Natural killer cell (primary cell): ENCODE measurements at regions of chr2 and their contacts with region 1.

Region 1: GRCh38 chr2:55050133-55050994 is at the start of gene RTN4:
- DNase-seq: peak; percentile 96 to 99
- ATAC-seq: peak; percentile 87 to 97 (median 91)
- H3K4me3 ChIP-seq: peak within 1 kb of the TSS; percentile 85
- H3K4me3 Mint-ChIP-seq: peak within 1 kb of the TSS; percentile 96
- H3K27ac ChIP-seq: peak within 1 kb of the TSS; percentile 92
- H3K27ac Mint-ChIP-seq: peak within 1 kb of the TSS; percentile 93 to 99
- H3K4me1 ChIP-seq: peaks cover 23% of the 10 kb centered on the region
- H3K4me1 Mint-ChIP-seq: peaks cover 63 to 73% of the 10 kb centered on the region in 2 donors
- H3K27me3 ChIP-seq: no peaks in the 10 kb centered on the region
- H3K27me3 Mint-ChIP-seq: no peaks in the 10 kb centered on the region
- CTCF ChIP-seq: no peak
- total RNA-seq, gene RTN4: 100 to 117 (median 109) TPM

Region 2: GRCh38 chr2:54723131-54723995 is 327.0 kb before region 1 on chr2 and contains the start of gene EML6:
- intact Hi-C with region 1: no loop called
- DNase-seq: peak; percentile 96 to 99
- ATAC-seq: peak; percentile 94 to 99 (median 95)
- H3K4me3 ChIP-seq: peak within 1 kb of the TSS; percentile 62
- H3K4me3 Mint-ChIP-seq: peak within 1 kb of the TSS; percentile 96
- H3K27ac ChIP-seq: peak within 1 kb of the TSS; percentile 59
- H3K27ac Mint-ChIP-seq: peak within 1 kb of the TSS; percentile 64 to 88
- H3K4me1 ChIP-seq: peaks cover 19% of the 10 kb centered on the region
- H3K4me1 Mint-ChIP-seq: peaks cover 20 to 21% of the 10 kb centered on the region in 2 donors
- H3K27me3 ChIP-seq: peaks cover 19% of the 10 kb centered on the region
- H3K27me3 Mint-ChIP-seq: peaks cover 44 to 50% of the 10 kb centered on the region in 2 donors
- CTCF ChIP-seq: peak; percentile 23
- total RNA-seq, gene EML6: 1.7 to 3.2 (median 2.4) TPM

Region 3: DNA sequence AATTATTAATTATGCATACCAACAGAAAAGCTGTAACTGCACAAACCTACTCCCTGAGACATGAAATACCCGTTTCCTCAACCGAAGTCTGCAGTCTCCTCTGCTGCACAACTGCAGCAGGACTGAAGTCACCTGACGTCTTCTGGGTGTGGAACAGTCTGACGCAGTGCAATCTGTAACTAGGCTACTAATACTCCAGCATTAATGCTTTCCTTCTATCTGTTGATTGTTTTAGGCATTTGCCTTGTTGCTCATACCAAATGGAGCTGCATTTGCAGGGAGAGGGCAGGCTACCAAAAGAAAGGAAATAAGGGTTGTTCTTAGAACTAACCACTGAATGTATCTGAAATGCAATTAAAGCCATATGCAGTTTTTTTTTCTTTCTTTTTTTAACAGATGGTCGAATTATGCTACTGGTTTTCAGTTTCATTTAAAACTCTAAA is 40.2 kb before region 1 on chr2:
- intact Hi-C with region 1: loop called (anchors 2 kb)
- DNase-seq: peak; percentile 33 to 79
- ATAC-seq: peak; percentile 92 to 96 (median 93)
- H3K4me3 ChIP-seq: peak overlapping the region; percentile 53
- H3K4me3 Mint-ChIP-seq: peak overlapping the region; percentile 92
- H3K27ac ChIP-seq: peak overlapping the region; percentile 68
- H3K27ac Mint-ChIP-seq: peak overlapping the region; percentile 84 to 92
- H3K4me1 ChIP-seq: peaks cover 7% of the 10 kb centered on the region
- H3K4me1 Mint-ChIP-seq: peaks cover 64 to 66% of the 10 kb centered on the region in 2 donors
- H3K27me3 ChIP-seq: no peaks in the 10 kb centered on the region
- H3K27me3 Mint-ChIP-seq: no peaks in the 10 kb centered on the region
- CTCF ChIP-seq: no peak

Region 4: DNA sequence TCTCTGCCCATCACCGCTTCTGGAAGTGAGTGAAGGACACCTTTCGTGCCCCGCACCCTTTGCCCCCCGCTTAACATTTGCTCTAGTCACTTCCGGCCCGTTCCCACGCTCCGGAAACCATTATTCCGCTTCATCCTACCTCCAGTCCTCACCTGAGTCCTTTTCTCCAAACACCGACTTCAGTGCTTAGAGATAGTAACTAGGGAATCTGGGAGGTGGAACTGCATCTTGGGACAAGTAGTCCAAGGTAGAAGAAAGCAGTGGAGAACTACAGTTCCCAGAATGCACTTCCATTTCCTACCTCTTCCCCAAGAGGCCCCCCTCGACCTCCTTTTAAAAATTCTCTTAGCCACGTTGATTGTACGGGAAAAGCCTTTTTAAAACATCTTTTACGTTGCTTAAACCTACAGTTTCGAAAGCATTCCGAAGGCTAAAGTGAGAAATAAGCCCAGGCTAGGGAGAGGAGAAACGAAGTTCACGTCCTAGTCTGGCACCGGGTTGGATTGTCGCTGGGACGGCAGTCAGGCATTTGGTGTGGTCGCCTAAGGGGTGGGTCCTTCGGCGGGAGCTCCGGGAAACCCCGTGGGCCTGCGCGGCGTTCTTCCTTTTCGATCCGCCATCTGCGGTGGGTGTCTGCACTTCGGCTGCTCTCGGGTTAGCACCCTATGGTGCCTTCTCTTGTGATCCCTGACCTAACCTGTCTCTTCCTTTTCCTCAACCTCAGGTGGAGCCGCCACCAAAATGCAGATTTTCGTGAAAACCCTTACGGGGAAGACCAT is 181.9 kb after region 1 on chr2 and contains the starts of genes CLHC1 and RPS27A:
- intact Hi-C with region 1: loop called (anchors 5 kb)
- DNase-seq: peak; percentile 93 to 97
- ATAC-seq: peak; percentile 86 to 95 (median 88)
- H3K4me3 ChIP-seq: peak within 1 kb of the TSS; percentile 87
- H3K4me3 Mint-ChIP-seq: peak within 1 kb of the TSS; percentile 99
- H3K27ac ChIP-seq: peak within 1 kb of the TSS; percentile 96
- H3K27ac Mint-ChIP-seq: peak within 1 kb of the TSS; percentile 98 to 100
- H3K4me1 ChIP-seq: peaks cover 18% of the 10 kb centered on the region
- H3K4me1 Mint-ChIP-seq: peaks cover 54 to 55% of the 10 kb centered on the region in 2 donors
- H3K27me3 ChIP-seq: no peaks in the 10 kb centered on the region
- H3K27me3 Mint-ChIP-seq: no peaks in the 10 kb centered on the region
- CTCF ChIP-seq: no peak
- total RNA-seq, gene CLHC1: 5.6 to 14.9 (median 6.3) TPM
- total RNA-seq, gene RPS27A: 830 to 1,009 (median 939) TPM

Region 5: DNA sequence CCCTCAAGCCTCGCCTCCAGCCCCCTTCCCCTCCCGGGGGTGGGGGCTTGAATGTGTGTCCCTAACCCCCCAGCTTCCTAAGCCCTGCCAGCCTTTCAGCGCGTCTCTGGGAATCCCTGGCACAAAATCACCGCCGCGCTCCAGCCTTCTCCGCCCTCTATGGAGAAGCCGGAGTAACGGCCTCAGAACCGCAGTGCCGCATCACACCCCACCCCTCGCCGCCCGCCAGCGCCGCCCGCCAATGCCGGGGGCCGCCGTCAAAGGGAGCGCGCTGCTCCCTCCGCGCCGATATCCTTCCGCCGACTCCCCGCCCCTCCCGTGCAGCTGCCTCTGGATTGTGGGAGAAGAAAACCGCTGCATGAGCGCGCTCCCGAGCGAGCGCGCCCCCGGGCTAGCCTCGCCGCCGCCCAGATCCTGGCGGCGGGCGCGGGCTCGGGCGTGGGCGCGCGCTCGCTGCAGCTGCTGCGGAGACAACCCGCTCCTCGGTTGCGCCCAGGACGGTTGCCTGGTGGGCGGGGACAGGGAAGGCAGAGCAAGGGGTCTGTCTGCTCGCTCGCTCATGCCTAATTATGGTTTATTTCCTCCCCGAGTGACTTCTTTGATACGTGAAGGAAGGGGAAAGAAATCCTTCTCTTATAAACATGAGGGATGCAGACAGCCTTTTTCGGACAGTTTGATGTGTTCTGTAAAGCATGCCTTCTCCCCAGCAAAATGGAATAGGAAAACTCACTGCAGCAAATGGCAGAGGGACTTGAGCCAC is 369.5 kb after region 1 on chr2 and contains the start of gene CCDC88A:
- intact Hi-C with region 1: loop called (anchors 5 kb)
- DNase-seq: peak; percentile 72 to 95
- ATAC-seq: peak; percentile 83 to 90 (median 84)
- H3K4me3 ChIP-seq: peak within 1 kb of the TSS; percentile 78
- H3K4me3 Mint-ChIP-seq: peak within 1 kb of the TSS; percentile 88
- H3K27ac ChIP-seq: peak within 1 kb of the TSS; percentile 70
- H3K27ac Mint-ChIP-seq: peak within 1 kb of the TSS; percentile 80 to 92
- H3K4me1 ChIP-seq: peaks cover 3% of the 10 kb centered on the region
- H3K4me1 Mint-ChIP-seq: peaks cover 31 to 38% of the 10 kb centered on the region in 2 donors
- H3K27me3 ChIP-seq: no peaks in the 10 kb centered on the region
- H3K27me3 Mint-ChIP-seq: peaks cover 4 to 11% of the 10 kb centered on the region in 2 donors
- CTCF ChIP-seq: no peak
- total RNA-seq, gene CCDC88A: 20.4 to 39.0 (median 26.4) TPM